ENCODE measurements at regions of chr5 and their contacts with region 1.

Region 1: GRCh38 chr5:79464695-79465332 is 49.1 kb downstream of the HOMER1 start:
- DNase-seq: no peak
- ATAC-seq: peak in 1 of 2 donors; percentile 60
- H3K4me3 ChIP-seq: no peak overlapping the region
- H3K27ac ChIP-seq: no peak overlapping the region
- H3K4me1 ChIP-seq: peaks cover 3 to 17% of the 10 kb centered on the region in 2 donors
- H3K27me3 ChIP-seq: no peaks in the 10 kb centered on the region
- CTCF ChIP-seq: peak in 4 of 5 experiments; percentile 18 to 60 (median 48)
- POLR2A ChIP-seq: no peak

Region 2: DNA sequence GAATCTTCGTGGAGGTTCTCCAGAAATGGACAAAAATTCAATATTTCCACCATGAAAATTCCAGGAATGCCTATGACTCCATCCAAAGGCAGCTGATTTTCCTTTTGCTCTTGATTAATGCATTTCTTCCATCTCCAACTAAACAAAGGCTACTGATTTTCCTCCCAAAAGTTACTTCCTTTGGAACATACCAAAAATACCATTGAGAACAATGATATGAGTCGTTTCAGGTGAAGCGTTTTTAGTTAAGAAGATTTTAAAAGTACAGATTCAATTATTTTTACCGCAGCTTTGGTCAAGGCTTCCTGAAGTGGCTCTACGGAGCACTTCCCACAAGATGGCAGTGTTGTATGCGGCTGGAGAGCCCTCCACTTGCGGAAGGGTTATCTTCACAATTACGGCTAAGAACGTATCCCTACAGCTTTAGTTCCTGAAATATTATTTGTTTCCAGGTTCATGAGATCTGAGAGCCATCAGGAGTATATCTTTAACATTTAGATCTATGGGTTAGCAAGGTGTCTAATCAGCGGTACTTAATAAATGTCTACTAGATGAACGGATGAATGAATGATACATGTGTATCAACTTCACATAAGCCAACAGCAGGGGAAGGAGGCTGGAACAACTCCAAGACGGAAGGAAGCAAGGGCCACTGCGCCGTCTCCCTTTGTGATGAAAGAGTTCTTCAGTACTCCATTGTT is 443.8 kb before region 1 on chr5:
- in situ Hi-C with region 1: loop called (anchors 25 kb)
- intact Hi-C with region 1: loop called (anchors 5 kb)
- DNase-seq: peak; percentile 30 to 33
- ATAC-seq: peak; percentile 72 to 85
- H3K4me3 ChIP-seq: peak overlapping the region in 2 of 4 donors; percentile 6 to 7
- H3K27ac ChIP-seq: no peak overlapping the region
- H3K4me1 ChIP-seq: peaks cover 0 to 3% of the 10 kb centered on the region in 2 donors
- H3K27me3 ChIP-seq: no peaks in the 10 kb centered on the region
- CTCF ChIP-seq: peak in 4 of 5 experiments; percentile 57 to 79 (median 65)
- POLR2A ChIP-seq: no peak

Region 3: DNA sequence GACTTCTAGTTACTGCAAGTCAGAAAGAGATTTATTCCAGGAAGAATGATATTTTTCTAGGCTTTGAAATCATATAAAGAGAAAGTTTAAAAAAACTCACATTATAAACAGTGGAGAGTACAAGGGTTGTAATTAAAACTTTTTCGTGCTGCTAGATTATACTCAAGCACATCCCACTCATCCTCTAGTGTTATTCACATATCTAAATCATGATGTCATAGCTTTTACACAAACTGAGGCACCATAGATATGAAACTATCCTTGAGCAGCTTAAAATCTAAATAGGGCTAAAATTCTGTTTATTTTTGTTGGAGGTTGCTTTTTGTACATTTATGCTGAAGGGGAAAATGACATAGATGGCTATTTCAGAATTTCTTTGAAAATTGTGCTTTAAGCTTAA is 177.4 kb after region 1 on chr5:
- in situ Hi-C with region 1: no loop called
- intact Hi-C with region 1: no loop called
- DNase-seq: no peak
- ATAC-seq: no peak
- H3K4me3 ChIP-seq: no peak overlapping the region
- H3K27ac ChIP-seq: no peak overlapping the region
- H3K4me1 ChIP-seq: peaks cover 0 to 4% of the 10 kb centered on the region in 2 donors
- H3K27me3 ChIP-seq: no peaks in the 10 kb centered on the region
- CTCF ChIP-seq: no peak
- POLR2A ChIP-seq: no peak

Region 4: DNA sequence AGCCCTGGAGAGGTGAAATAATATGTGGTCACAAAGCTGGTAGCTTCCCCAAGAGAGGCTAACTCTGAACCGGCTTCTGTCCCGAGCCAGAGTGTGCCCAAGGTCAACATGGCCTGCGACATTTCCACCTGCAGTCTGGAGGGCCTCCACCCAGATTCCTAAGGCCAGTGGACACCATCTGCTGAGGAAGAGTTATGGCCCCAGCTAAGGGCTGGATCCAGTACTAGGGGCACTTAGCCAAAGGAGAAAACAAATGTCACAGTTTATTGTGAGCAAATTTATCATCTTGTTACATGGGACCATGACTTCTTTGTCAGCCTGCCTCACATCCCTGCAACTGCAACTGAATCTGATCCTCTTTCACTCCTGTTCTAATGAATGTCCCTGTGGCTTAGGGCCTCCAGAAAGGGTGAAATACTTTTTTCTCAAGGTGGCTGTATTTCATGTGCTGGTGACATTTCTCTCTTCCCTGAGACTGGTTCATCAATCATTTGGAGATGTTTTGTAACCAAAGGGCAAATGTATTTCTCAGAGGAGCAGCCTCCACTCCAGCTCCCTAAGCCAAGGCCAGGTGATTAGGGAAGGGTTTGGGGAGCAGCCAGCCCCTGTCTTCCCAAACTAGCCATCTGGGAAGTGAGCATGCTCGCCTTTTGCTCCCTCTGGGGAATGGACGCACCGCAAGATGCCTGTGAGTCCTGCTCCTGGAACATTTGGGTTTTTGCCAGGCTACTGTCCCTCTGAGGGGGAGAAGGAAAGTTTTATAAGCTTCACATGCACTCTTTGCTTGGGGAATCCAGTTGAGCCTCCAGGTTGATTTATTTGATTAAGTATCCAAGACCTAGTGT is 373.2 kb after region 1 on chr5:
- in situ Hi-C with region 1: no loop called
- intact Hi-C with region 1: no loop called
- DNase-seq: peak in 1 of 2 donors; percentile 64
- ATAC-seq: peak; percentile 29 to 41
- H3K4me3 ChIP-seq: no peak overlapping the region
- H3K27ac ChIP-seq: peak overlapping the region; percentile 14 to 62 (median 48)
- H3K4me1 ChIP-seq: peaks cover 36 to 44% of the 10 kb centered on the region in 2 donors
- H3K27me3 ChIP-seq: no peaks in the 10 kb centered on the region
- CTCF ChIP-seq: no peak
- POLR2A ChIP-seq: no peak

Measured in gastrocnemius medialis (tissue), 4 donors.